ENCODE measurements at regions of chr6 and their contacts with region 1.

Region 1: GRCh38 chr6:26234421-26235296 is 130.3 kb upstream of the BTN3A2 start:
- DNase-seq: peak; percentile 52 to 83 (median 66)
- ATAC-seq: peak; percentile 66 to 78 (median 76)
- H3K4me3 ChIP-seq: peak overlapping the region; percentile 88 to 98
- H3K4me3 Mint-ChIP-seq: peak overlapping the region; percentile 87 to 96 (median 88)
- H3K27ac ChIP-seq: peak overlapping the region; percentile 95
- H3K27ac Mint-ChIP-seq: peak overlapping the region; percentile 96 to 100
- H3K4me1 ChIP-seq: peaks cover 13 to 19% of the 10 kb centered on the region in 2 experiments
- H3K4me1 Mint-ChIP-seq: peaks cover 32 to 39% (median 36%) of the 10 kb centered on the region in 3 donors
- H3K27me3 ChIP-seq: no peaks in the 10 kb centered on the region
- H3K27me3 Mint-ChIP-seq: no peaks in the 10 kb centered on the region

Region 2: GRCh38 chr6:26183581-26184366 is 50.9 kb before region 1 on chr6:
- CTCF ChIA-PET with region 1: interaction called in 1 of 2 experiments, 12 read pairs
- POLR2A ChIA-PET with region 1: interaction called, 4 to 13 read pairs
- DNase-seq: peak in 25 of 35 experiments; percentile 20 to 85 (median 42)
- ATAC-seq: peak; percentile 87 to 91 (median 89)
- H3K4me3 ChIP-seq: peak overlapping the region; percentile 57 to 83
- H3K4me3 Mint-ChIP-seq: peak overlapping the region; percentile 88 to 96 (median 93)
- H3K27ac ChIP-seq: peak overlapping the region; percentile 76
- H3K27ac Mint-ChIP-seq: peak overlapping the region; percentile 94 to 98
- H3K4me1 ChIP-seq: peaks cover 12 to 30% of the 10 kb centered on the region in 2 experiments
- H3K4me1 Mint-ChIP-seq: peaks cover 42 to 48% (median 46%) of the 10 kb centered on the region in 3 donors
- H3K27me3 ChIP-seq: no peaks in the 10 kb centered on the region
- H3K27me3 Mint-ChIP-seq: no peaks in the 10 kb centered on the region

Region 3: DNA sequence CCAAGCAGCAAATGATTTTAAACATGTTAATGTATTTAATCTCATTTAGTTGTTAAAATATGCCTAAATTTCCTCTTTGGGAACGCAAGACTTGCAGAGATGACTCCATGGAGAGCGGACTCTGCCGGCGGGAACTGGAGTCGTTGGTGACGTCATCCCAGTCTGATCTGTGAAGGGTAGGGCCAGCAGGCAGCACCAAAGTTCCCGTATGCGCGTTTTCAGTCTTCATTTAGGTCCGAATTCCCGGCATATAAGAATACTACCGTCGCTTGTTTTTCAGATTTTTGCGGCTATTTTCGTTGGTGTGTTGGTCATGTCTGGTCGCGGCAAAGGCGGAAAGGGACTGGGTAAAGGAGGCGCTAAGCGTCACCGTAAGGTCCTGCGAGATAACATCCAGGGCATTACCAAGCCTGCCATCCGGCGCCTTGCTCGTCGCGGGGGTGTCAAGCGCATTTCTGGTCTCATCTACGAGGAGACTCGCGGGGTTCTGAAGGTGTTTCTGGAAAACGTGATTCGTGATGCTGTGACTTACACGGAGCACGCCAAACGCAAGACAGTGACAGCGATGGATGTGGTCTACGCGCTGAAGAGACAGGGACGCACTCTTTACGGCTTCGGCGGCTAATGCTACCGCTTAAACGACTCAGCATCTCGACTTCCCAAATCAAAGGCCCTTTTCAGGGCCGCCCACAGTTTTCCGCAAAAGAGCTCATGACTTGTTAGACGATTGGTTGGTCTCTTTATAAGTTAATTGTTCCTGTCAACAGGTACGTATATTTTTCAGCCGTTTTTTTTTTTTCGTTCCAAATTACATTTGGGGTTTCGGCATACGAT is 30.1 kb before region 1 on chr6:
- CTCF ChIA-PET with region 1: interaction called, 4 to 10 read pairs
- POLR2A ChIA-PET with region 1: interaction called, 33 to 154 read pairs
- DNase-seq: peak; percentile 73 to 96 (median 82)
- ATAC-seq: peak; percentile 63 to 70 (median 68)
- H3K4me3 ChIP-seq: peak overlapping the region; percentile 73 to 98
- H3K4me3 Mint-ChIP-seq: no peak overlapping the region
- H3K27ac ChIP-seq: peak overlapping the region; percentile 93
- H3K27ac Mint-ChIP-seq: no peak overlapping the region
- H3K4me1 ChIP-seq: peaks cover 23 to 37% of the 10 kb centered on the region in 2 experiments
- H3K4me1 Mint-ChIP-seq: peaks cover 17 to 28% (median 24%) of the 10 kb centered on the region in 3 donors
- H3K27me3 ChIP-seq: no peaks in the 10 kb centered on the region
- H3K27me3 Mint-ChIP-seq: no peaks in the 10 kb centered on the region

Region 4: GRCh38 chr6:26223650-26224546 is 10.8 kb before region 1 on chr6:
- CTCF ChIA-PET with region 1: interaction called in 1 of 2 experiments, 7 read pairs
- POLR2A ChIA-PET with region 1: interaction called, 9 to 42 read pairs
- DNase-seq: peak in 34 of 35 experiments; percentile 36 to 84 (median 58)
- ATAC-seq: peak; percentile 87 to 90 (median 89)
- H3K4me3 ChIP-seq: peak overlapping the region; percentile 58 to 92
- H3K4me3 Mint-ChIP-seq: no peak overlapping the region
- H3K27ac ChIP-seq: peak overlapping the region; percentile 95
- H3K27ac Mint-ChIP-seq: no peak overlapping the region
- H3K4me1 ChIP-seq: peaks cover 10 to 13% of the 10 kb centered on the region in 2 experiments
- H3K4me1 Mint-ChIP-seq: peaks cover 5 to 14% (median 14%) of the 10 kb centered on the region in 3 donors
- H3K27me3 ChIP-seq: no peaks in the 10 kb centered on the region
- H3K27me3 Mint-ChIP-seq: no peaks in the 10 kb centered on the region

Region 5: GRCh38 chr6:26588965-26589364 is 354.3 kb after region 1 on chr6:
- CTCF ChIA-PET with region 1: no interaction called
- POLR2A ChIA-PET with region 1: no interaction called
- DNase-seq: no peak
- ATAC-seq: no peak
- H3K4me3 ChIP-seq: no peak overlapping the region
- H3K4me3 Mint-ChIP-seq: no peak overlapping the region
- H3K27ac ChIP-seq: no peak overlapping the region
- H3K27ac Mint-ChIP-seq: no peak overlapping the region
- H3K4me1 ChIP-seq: no peaks in the 10 kb centered on the region
- H3K4me1 Mint-ChIP-seq: no peaks in the 10 kb centered on the region
- H3K27me3 ChIP-seq: peaks cover 12 to 15% of the 10 kb centered on the region in 2 experiments
- H3K27me3 Mint-ChIP-seq: peaks cover 19 to 29% of the 10 kb centered on the region in 2 donors

Measured in T-cell (primary cell).